ENCODE measurements at regions of chr14 and their contacts with region 1.

Region 1: GRCh38 chr14:94136575-94137331 is 7.3 kb upstream of the IFI27L2 start:
- DNase-seq: peak; percentile 79 to 97 (median 94)

Region 2: GRCh38 chr14:93042968-93043940 is 1093.5 kb before region 1 on chr14:
- intact Hi-C with region 1: no loop called
- DNase-seq: no peak

Region 3: GRCh38 chr14:93939304-93940229 is 197.2 kb before region 1 on chr14:
- intact Hi-C with region 1: loop called (anchors 5 kb)
- DNase-seq: peak; percentile 47 to 96 (median 83)

Region 4: GRCh38 chr14:94036313-94037050 is 100.3 kb before region 1 on chr14:
- intact Hi-C with region 1: loop called (anchors 1 kb)
- DNase-seq: peak in 8 of 10 donors; percentile 48 to 93 (median 68)

Region 5: DNA sequence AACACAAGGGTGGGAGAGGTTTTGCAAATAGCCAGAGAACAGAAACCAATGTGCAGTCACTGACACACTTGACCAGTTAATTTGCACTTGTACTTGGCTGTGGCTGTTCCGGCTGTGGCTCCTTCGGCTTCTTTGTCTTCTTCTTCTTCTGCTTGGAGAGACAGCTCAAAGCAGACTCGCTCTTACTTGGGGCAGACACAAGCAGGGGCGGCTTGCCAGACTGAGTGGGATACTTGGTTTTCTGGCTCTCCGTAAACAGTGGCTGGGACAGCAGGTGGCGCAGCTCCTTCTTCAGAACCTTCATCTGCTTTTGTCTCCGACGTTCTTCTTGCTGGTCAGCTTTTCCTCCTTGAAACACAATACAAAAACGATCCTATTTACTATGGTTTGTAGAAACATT is 85.6 kb before region 1 on chr14:
- intact Hi-C with region 1: loop called (anchors 2 kb)
- DNase-seq: peak; percentile 64 to 96 (median 80)

Region 6: GRCh38 chr14:94080471-94081289 is 56.1 kb before region 1 on chr14 and contains the start of gene DDX24:
- intact Hi-C with region 1: loop called (anchors 2 kb)
- DNase-seq: peak; percentile 94 to 100 (median 98)

Region 7: GRCh38 chr14:94157197-94157596 is 20.4 kb after region 1 on chr14:
- intact Hi-C with region 1: no loop called
- DNase-seq: no peak

Region 8: DNA sequence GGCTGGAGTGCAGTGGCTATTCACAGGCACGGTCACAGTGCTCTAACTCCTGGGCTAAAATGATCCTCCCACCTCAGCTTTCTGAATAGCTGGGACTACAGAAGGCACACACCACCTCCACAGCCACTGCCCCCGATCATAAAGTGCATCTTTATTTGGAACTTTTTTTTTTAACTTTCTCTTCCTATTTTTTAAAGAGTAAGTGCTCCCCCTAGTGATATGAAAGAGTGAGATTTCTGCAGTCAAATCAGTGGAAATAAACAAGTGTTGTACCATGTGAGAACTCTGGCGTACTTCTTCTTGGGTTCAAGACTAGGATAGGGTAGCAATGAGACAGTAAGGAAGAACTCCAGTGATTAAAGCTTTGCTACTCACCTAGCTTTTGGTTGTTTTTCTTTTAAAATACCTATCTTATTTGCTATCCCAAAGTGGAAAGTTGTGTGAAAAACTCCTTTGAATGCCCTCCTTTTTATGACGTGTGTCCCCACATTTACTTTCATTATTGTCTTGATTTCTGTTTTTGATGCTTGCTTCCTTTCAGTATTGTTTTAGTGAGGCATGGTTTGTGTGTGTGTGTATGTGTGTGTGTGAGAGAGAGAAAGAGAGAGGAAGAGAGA is 44.0 kb after region 1 on chr14:
- intact Hi-C with region 1: loop called (anchors 2 kb)
- DNase-seq: no peak

Measured in posterior cingulate gyrus (tissue), 11 donors.